ENCODE measurements at regions of chr18 and their contacts with region 1.

Region 1: DNA sequence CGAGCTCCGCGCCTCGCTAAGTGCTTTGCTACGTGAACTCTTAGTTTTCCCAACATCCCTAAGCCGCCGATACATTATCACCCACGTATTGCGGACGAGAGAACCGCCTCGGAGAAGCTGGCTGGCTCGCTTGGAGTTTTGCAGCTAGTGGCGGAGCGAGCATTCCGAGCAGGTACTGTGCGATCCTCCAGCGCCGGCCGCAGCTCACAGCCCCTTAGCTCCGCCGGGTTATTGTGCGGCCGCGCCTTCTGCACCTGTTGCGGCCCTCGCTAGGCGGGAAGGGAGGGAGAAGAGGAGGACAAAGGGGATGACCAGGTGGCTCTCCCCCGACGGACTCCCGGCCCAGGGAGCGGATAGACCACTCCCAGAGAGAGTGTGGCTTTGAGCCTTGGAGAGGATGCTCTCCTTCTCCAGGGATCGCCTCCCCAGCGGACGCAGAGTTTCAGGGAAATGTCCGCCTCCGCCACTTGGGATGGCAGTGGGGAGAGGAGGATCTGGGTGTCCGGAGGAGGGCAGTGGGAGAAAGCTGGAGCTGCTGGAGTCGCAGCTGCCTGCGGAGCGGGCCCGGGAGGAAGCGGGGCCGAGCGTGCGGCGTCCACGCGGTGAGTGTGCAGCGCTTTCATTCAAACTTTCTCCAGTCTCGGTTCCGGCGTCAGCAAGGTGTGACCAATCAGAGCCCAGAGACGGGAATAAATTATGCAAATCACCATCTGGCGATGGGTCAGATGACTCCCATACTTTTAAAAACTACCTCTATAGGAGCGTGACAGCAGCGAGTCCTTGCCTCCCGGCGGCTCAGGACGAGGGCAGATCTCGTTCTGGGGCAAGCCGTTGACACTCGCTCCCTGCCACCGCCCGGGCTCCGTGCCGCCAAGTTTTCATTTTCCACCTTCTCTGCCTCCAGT is at the start of gene LIPG:
- DNase-seq: peak; percentile 66
- H3K4me3 ChIP-seq: peak within 1 kb of the TSS; percentile 47 to 70
- H3K27ac ChIP-seq: peak within 1 kb of the TSS in 1 of 2 experiments; percentile 5; a peak in 1 of 4 replicates
- H3K4me1 ChIP-seq: peaks cover 23 to 33% of the 10 kb centered on the region in 2 experiments; a peak in 3 of 4 replicates
- H3K27me3 ChIP-seq: no peaks in the 10 kb centered on the region
- CTCF ChIP-seq: no peak
- EP300 ChIP-seq: no peak
- RAD21 ChIP-seq: no peak
- polyA plus RNA-seq, gene LIPG: 3.2 and 4.4 TPM in 2 replicates

Region 2: DNA sequence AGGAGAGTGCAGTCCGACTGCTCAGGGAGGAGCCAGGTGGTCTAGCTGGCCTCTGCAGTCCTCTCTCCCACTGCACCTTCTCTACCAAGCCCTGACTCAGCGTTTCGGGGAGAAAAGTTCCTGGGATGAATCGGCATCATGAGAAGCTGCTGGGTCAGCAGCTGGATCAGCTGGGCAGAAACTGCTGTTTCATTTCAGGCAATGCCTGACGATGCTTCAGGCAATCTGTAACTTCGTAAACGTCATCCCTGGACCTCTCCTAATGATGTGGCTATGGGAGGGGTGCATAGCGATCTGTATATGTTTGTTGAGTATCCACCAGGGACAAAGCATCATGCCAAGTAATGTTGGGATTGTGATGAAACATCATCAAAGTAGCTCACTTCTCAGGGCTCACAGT is 21.0 kb after region 1 on chr18:
- CTCF ChIA-PET with region 1: interaction called, 13 read pairs
- POLR2A ChIA-PET with region 1: no interaction called
- DNase-seq: no peak
- H3K4me3 ChIP-seq: no peak overlapping the region
- H3K27ac ChIP-seq: no peak overlapping the region
- H3K4me1 ChIP-seq: no peaks in the 10 kb centered on the region
- H3K27me3 ChIP-seq: no peaks in the 10 kb centered on the region
- CTCF ChIP-seq: no peak
- EP300 ChIP-seq: no peak
- RAD21 ChIP-seq: no peak

Region 3: DNA sequence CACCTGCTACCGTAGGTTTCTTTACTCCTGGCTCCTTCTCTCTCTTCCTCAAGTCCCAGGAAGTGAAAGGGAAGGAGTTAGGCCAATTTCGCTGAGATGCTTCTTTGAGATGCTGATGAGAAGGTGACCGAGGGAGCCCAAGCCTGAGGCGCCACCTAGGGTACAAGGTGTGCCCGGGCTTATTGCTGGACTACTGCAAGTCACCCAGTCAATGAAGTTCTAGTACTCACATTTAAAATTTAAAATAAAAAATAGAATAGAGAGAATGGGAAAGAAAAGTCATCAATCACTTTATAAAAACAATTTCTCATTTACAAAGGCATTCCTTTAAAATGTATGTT is 206.5 kb after region 1 on chr18:
- CTCF ChIA-PET with region 1: interaction called, 17 read pairs
- POLR2A ChIA-PET with region 1: no interaction called
- DNase-seq: no peak
- H3K4me3 ChIP-seq: no peak overlapping the region; a peak in 1 of 4 replicates
- H3K27ac ChIP-seq: no peak overlapping the region
- H3K4me1 ChIP-seq: 0 out of 4 replicates have a peak, but pooled peaks cover 0 to 5% of the 10 kb centered on the region in 2 experiments
- H3K27me3 ChIP-seq: no peaks in the 10 kb centered on the region
- CTCF ChIP-seq: peak; percentile 76
- EP300 ChIP-seq: no peak
- RAD21 ChIP-seq: peak; percentile 72

Region 4: GRCh38 chr18:49784427-49785185 is 223.1 kb after region 1 on chr18:
- CTCF ChIA-PET with region 1: interaction called, 16 read pairs
- POLR2A ChIA-PET with region 1: no interaction called
- DNase-seq: no peak
- H3K4me3 ChIP-seq: no peak overlapping the region
- H3K27ac ChIP-seq: peak overlapping the region in 1 of 2 experiments; percentile 40; a peak in 1 of 4 replicates
- H3K4me1 ChIP-seq: peaks cover 0 to 6% of the 10 kb centered on the region in 2 experiments; a peak in 2 of 4 replicates
- H3K27me3 ChIP-seq: no peaks in the 10 kb centered on the region
- CTCF ChIP-seq: peak; percentile 58
- EP300 ChIP-seq: no peak
- RAD21 ChIP-seq: peak; percentile 31; the same call in 1 of the 2 replicates